MCF 10A (cell line): ENCODE measurements at regions of chr3 and their contacts with region 1.

Region 1: GRCh38 chr3:132343018-132343612 is 25.9 kb downstream of the ACP3 start:
- DNase-seq: peak; percentile 69
- H3K4me3 Mint-ChIP-seq: no peak overlapping the region
- H3K27ac Mint-ChIP-seq: no peak overlapping the region
- H3K4me1 Mint-ChIP-seq: peaks cover 19% of the 10 kb centered on the region
- H3K27me3 Mint-ChIP-seq: no peaks in the 10 kb centered on the region
- CTCF ChIP-seq: peak; percentile 85

Region 2: GRCh38 chr3:132253262-132253878 is 89.7 kb before region 1 on chr3:
- CTCF ChIA-PET with region 1: interaction called, 221 read pairs
- POLR2A ChIA-PET with region 1: interaction called, 4 read pairs
- intact Hi-C with region 1: loop called (anchors 1 kb)
- DNase-seq: peak; percentile 69
- H3K4me3 Mint-ChIP-seq: no peak overlapping the region
- H3K27ac Mint-ChIP-seq: no peak overlapping the region
- H3K4me1 Mint-ChIP-seq: no peaks in the 10 kb centered on the region
- H3K27me3 Mint-ChIP-seq: no peaks in the 10 kb centered on the region
- CTCF ChIP-seq: peak; percentile 77

Region 3: GRCh38 chr3:132290833-132291232 is 52.3 kb before region 1 on chr3:
- CTCF ChIA-PET with region 1: interaction called, 16 read pairs
- POLR2A ChIA-PET with region 1: no interaction called
- intact Hi-C with region 1: no loop called
- DNase-seq: peak; percentile 68
- H3K4me3 Mint-ChIP-seq: no peak overlapping the region
- H3K27ac Mint-ChIP-seq: no peak overlapping the region
- H3K4me1 Mint-ChIP-seq: peaks cover 6% of the 10 kb centered on the region
- H3K27me3 Mint-ChIP-seq: no peaks in the 10 kb centered on the region
- CTCF ChIP-seq: no peak

Region 4: GRCh38 chr3:132326251-132326650 is 16.9 kb before region 1 on chr3:
- CTCF ChIA-PET with region 1: interaction called, 33 read pairs
- POLR2A ChIA-PET with region 1: interaction called, 3 read pairs
- intact Hi-C with region 1: no loop called
- DNase-seq: no peak
- H3K4me3 Mint-ChIP-seq: no peak overlapping the region
- H3K27ac Mint-ChIP-seq: no peak overlapping the region
- H3K4me1 Mint-ChIP-seq: no peaks in the 10 kb centered on the region
- H3K27me3 Mint-ChIP-seq: no peaks in the 10 kb centered on the region
- CTCF ChIP-seq: no peak

Region 5: DNA sequence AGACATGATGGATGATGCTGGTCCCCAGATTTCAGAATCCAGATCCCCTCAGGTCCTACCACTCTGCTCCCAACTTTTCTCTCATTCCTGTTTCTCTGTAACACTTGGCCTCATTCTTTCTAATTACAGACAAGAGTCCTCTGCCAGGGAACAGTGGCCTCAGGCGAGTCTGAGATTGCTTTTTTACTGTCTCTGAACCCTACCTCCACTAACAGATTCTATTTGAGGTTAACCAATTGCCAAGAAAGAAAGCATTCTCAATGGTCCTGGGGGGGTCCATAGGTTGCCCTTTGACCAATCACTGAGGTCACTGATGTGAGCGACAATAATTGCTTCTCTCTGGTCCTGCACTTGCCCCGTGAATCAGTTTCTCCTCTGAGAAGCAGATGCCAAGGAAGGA is 549.8 kb after region 1 on chr3:
- CTCF ChIA-PET with region 1: no interaction called
- POLR2A ChIA-PET with region 1: no interaction called
- intact Hi-C with region 1: no loop called
- DNase-seq: no peak
- H3K4me3 Mint-ChIP-seq: no peak overlapping the region
- H3K27ac Mint-ChIP-seq: no peak overlapping the region
- H3K4me1 Mint-ChIP-seq: no peaks in the 10 kb centered on the region
- H3K27me3 Mint-ChIP-seq: no peaks in the 10 kb centered on the region
- CTCF ChIP-seq: no peak